Heart left ventricle (tissue), 16 donors: ENCODE measurements at regions of chr18 and their contacts with region 1.

Region 1: DNA sequence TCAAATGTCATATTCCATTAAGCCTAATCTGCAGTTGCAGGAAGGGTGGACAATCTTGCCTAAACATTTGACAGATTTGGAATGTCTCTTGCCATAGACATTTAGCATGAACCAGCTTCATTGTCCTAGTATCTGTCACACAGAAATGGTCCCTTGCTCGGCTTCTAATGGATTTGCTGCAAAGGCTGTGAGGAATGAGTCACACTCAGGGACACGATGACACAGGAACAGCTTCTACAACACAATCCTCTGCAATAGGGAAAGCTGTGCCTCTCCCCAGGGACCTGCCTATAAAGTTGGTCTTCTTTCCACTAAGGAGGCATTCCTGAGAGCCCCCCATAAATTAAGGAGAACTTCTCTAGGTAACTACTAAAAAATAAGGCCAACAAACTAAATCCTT is 155.1 kb upstream of the L3MBTL4 start:
- DNase-seq: no peak
- ATAC-seq: no peak
- H3K4me3 ChIP-seq: no peak overlapping the region
- H3K27ac ChIP-seq: no peak overlapping the region
- H3K4me1 ChIP-seq: no peaks in the 10 kb centered on the region
- H3K27me3 ChIP-seq: no peaks in the 10 kb centered on the region
- CTCF ChIP-seq: no peak
- POLR2A ChIP-seq: no peak

Region 2: GRCh38 chr18:6624271-6624660 is 54.5 kb after region 1 on chr18:
- intact Hi-C with region 1: loop called in 1 of 10 experiments (anchors 5 kb)
- DNase-seq: no peak
- ATAC-seq: peak in 1 of 4 donors; percentile 68
- H3K4me3 ChIP-seq: no peak overlapping the region
- H3K27ac ChIP-seq: peak overlapping the region in 5 of 12 donors; percentile 2 to 44 (median 42)
- H3K4me1 ChIP-seq: peaks cover 0 to 25% (median 5%) of the 10 kb centered on the region in 12 donors
- H3K27me3 ChIP-seq: no peaks in the 10 kb centered on the region
- CTCF ChIP-seq: no peak
- POLR2A ChIP-seq: no peak